ENCODE measurements at regions of chr10 and their contacts with region 1.

Region 1: GRCh38 chr10:15813415-15813814 is 46.9 kb downstream of the MINDY3 start:
- DNase-seq: peak; percentile 79
- ATAC-seq: peak; percentile 98
- H3K4me3 ChIP-seq: no peak overlapping the region
- H3K27ac ChIP-seq: peak overlapping the region; percentile 57
- H3K4me1 ChIP-seq: peaks cover 20% of the 10 kb centered on the region
- H3K27me3 ChIP-seq: no peaks in the 10 kb centered on the region
- CTCF ChIP-seq: no peak

Region 2: GRCh38 chr10:15784717-15785211 is 28.7 kb before region 1 on chr10:
- CTCF ChIA-PET with region 1: no interaction called
- POLR2A ChIA-PET with region 1: no interaction called
- intact Hi-C with region 1: no loop called
- DNase-seq: peak; percentile 62
- ATAC-seq: peak; percentile 49
- H3K4me3 ChIP-seq: no peak overlapping the region
- H3K27ac ChIP-seq: peak overlapping the region; percentile 43
- H3K4me1 ChIP-seq: peaks cover 27% of the 10 kb centered on the region
- H3K27me3 ChIP-seq: no peaks in the 10 kb centered on the region
- CTCF ChIP-seq: no peak

Region 3: DNA sequence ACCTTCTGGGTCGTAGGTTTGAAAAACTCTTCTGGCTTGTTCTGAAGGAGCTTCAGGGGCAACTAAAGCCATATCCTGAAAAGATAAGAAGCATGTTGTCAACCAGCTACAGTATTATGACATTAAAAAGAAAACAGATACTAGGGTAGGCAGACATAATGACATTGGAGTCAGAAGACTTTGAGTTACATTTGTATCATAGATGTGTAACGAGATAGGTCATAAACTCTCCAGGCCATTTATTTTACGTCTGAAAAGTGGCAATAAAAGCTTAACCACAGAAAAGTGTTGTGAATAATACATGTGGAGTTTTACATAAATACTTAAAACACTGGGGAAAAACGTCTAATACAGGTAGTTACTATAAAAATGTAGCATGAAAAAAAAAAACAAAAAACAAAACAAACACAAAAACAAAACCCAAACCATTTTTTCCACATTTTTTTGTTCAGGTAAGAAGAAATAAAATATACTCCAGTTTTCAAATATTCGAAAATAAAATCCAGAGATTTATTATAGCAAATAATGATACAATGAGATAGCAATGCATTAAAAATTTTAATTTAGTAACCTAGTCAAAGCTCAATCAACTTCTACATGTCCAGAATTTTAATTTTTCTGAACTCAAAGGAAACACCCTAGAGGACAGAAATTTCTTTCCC is 17.2 kb before region 1 on chr10:
- CTCF ChIA-PET with region 1: no interaction called
- POLR2A ChIA-PET with region 1: interaction called, 3 read pairs
- intact Hi-C with region 1: loop called (anchors 2 kb)
- DNase-seq: no peak
- ATAC-seq: no peak
- H3K4me3 ChIP-seq: no peak overlapping the region
- H3K27ac ChIP-seq: peak overlapping the region; percentile 54
- H3K4me1 ChIP-seq: peaks cover 14% of the 10 kb centered on the region
- H3K27me3 ChIP-seq: no peaks in the 10 kb centered on the region
- CTCF ChIP-seq: no peak

Region 4: DNA sequence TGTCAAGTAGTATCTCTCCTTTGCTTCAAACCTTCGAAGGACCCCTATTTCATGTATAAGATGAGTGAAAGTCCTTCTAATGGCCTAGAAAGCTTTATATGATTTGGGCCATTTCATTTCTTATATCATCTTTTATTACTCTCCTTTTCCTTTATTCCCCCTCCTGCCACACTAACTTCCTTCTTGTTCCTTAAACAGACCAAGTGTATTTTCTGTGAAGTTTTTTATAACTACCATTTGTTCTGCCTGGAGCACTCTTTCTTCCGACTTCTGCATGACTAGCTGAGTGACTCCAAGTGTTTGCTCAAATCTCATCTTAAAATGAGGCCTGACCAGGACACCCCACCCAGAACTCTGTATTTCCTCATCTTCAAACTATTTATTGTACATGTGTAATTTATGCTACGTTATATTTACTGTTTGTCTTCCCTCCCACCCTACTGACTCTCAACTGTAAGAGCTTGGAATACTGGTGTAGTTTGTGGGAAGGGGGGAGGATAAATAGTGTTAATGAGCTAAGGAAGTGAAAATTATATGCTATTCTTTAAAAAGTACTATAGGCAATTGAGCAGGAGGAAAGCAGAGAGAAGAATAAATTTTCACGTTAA is 43.7 kb after region 1 on chr10:
- CTCF ChIA-PET with region 1: no interaction called
- POLR2A ChIA-PET with region 1: no interaction called
- intact Hi-C with region 1: loop called (anchors 1 kb)
- DNase-seq: peak; percentile 63
- ATAC-seq: peak; percentile 69
- H3K4me3 ChIP-seq: peak overlapping the region; percentile 97
- H3K27ac ChIP-seq: peak overlapping the region; percentile 89
- H3K4me1 ChIP-seq: peaks cover 20% of the 10 kb centered on the region
- H3K27me3 ChIP-seq: no peaks in the 10 kb centered on the region
- CTCF ChIP-seq: no peak